ENCODE measurements at regions of chr4 and their contacts with region 1.

Region 1: GRCh38 chr4:77036206-77036605 is 39.6 kb downstream of the CCNI start:
- DNase-seq: peak in 1 of 2 donors; percentile 57
- H3K4me3 ChIP-seq: no peak overlapping the region
- H3K27ac ChIP-seq: peak overlapping the region in 1 of 2 donors; percentile 48
- H3K4me1 ChIP-seq: peaks cover 0 to 7% of the 10 kb centered on the region in 2 donors
- H3K27me3 ChIP-seq: no peaks in the 10 kb centered on the region
- CTCF ChIP-seq: no peak
- POLR2A ChIP-seq: no peak

Region 2: GRCh38 chr4:77089866-77090265 is 53.7 kb after region 1 on chr4:
- intact Hi-C with region 1: loop called (anchors 2 kb)
- DNase-seq: no peak
- H3K4me3 ChIP-seq: no peak overlapping the region
- H3K27ac ChIP-seq: no peak overlapping the region
- H3K4me1 ChIP-seq: no peaks in the 10 kb centered on the region
- H3K27me3 ChIP-seq: no peaks in the 10 kb centered on the region
- CTCF ChIP-seq: no peak
- POLR2A ChIP-seq: no peak

Measured in breast epithelium (tissue), 4 donors.